Naive thymus-derived CD4-positive, alpha-beta T cell (primary cell): ENCODE measurements at regions of chr1 and their contacts with region 1.

Region 1: GRCh38 chr1:84690397-84691121 is at the start of gene SSX2IP:
- DNase-seq: peak; percentile 97 to 100 (median 99)
- ATAC-seq: peak; percentile 94
- H3K4me3 ChIP-seq: peak within 1 kb of the TSS; percentile 85
- H3K4me3 Mint-ChIP-seq: peak within 1 kb of the TSS; percentile 85 to 99 (median 92)
- H3K27ac ChIP-seq: peak within 1 kb of the TSS; percentile 82
- H3K27ac Mint-ChIP-seq: peak within 1 kb of the TSS; percentile 92 to 98 (median 96)
- H3K4me1 ChIP-seq: peaks cover 3 to 24% of the 10 kb centered on the region in 2 donors
- H3K4me1 Mint-ChIP-seq: peaks cover 29 to 76% (median 60%) of the 10 kb centered on the region in 7 donors
- H3K27me3 ChIP-seq: no peaks in the 10 kb centered on the region
- H3K27me3 Mint-ChIP-seq: no peaks in the 10 kb centered on the region
- total RNA-seq, gene SSX2IP: 7.5 to 13.4 (median 8.1) TPM

Region 2: GRCh38 chr1:84077476-84078107 is 613.0 kb before region 1 on chr1:
- CTCF ChIA-PET with region 1: no interaction called
- POLR2A ChIA-PET with region 1: no interaction called
- intact Hi-C with region 1: loop called (anchors 5 kb)
- DNase-seq: peak; percentile 64 to 79 (median 72)
- ATAC-seq: peak; percentile 97
- H3K4me3 ChIP-seq: peak overlapping the region; percentile 79
- H3K4me3 Mint-ChIP-seq: peak overlapping the region; percentile 84 to 93 (median 90)
- H3K27ac ChIP-seq: peak overlapping the region; percentile 66
- H3K27ac Mint-ChIP-seq: peak overlapping the region; percentile 23 to 87 (median 75)
- H3K4me1 ChIP-seq: peaks cover 9 to 10% of the 10 kb centered on the region in 2 donors
- H3K4me1 Mint-ChIP-seq: peaks cover 6 to 23% (median 14%) of the 10 kb centered on the region in 7 donors
- H3K27me3 ChIP-seq: no peaks in the 10 kb centered on the region
- H3K27me3 Mint-ChIP-seq: peaks cover 0 to 35% (median 0%) of the 10 kb centered on the region in 5 donors

Region 3: GRCh38 chr1:84433258-84434080 is 257.1 kb before region 1 on chr1:
- CTCF ChIA-PET with region 1: interaction called, 4 read pairs
- POLR2A ChIA-PET with region 1: interaction called, 4 read pairs
- intact Hi-C with region 1: loop called (anchors 1 to 2 kb)
- DNase-seq: peak in 7 of 9 donors; percentile 71 to 85 (median 79)
- ATAC-seq: peak; percentile 92
- H3K4me3 ChIP-seq: peak overlapping the region; percentile 34
- H3K4me3 Mint-ChIP-seq: peak overlapping the region in 9 of 10 donors; percentile 29 to 82 (median 77)
- H3K27ac ChIP-seq: peak overlapping the region; percentile 73
- H3K27ac Mint-ChIP-seq: peak overlapping the region in 2 of 9 donors; percentile 85 to 90
- H3K4me1 ChIP-seq: peaks cover 23 to 41% of the 10 kb centered on the region in 2 donors
- H3K4me1 Mint-ChIP-seq: peaks cover 0 to 12% (median 9%) of the 10 kb centered on the region in 7 donors
- H3K27me3 ChIP-seq: no peaks in the 10 kb centered on the region
- H3K27me3 Mint-ChIP-seq: no peaks in the 10 kb centered on the region

Region 4: GRCh38 chr1:84573967-84574842 is 116.4 kb before region 1 on chr1 and contains the start of gene CTBS:
- CTCF ChIA-PET with region 1: no interaction called
- POLR2A ChIA-PET with region 1: interaction called, 14 read pairs
- intact Hi-C with region 1: loop called (anchors 1 kb)
- DNase-seq: peak; percentile 69 to 84 (median 82)
- ATAC-seq: peak; percentile 96
- H3K4me3 ChIP-seq: peak within 1 kb of the TSS; percentile 77
- H3K4me3 Mint-ChIP-seq: peak within 1 kb of the TSS; percentile 97 to 99 (median 99)
- H3K27ac ChIP-seq: peak within 1 kb of the TSS; percentile 99
- H3K27ac Mint-ChIP-seq: peak within 1 kb of the TSS; percentile 98 to 100 (median 100)
- H3K4me1 ChIP-seq: peaks cover 9 to 13% of the 10 kb centered on the region in 2 donors
- H3K4me1 Mint-ChIP-seq: peaks cover 29 to 51% (median 40%) of the 10 kb centered on the region in 7 donors
- H3K27me3 ChIP-seq: no peaks in the 10 kb centered on the region
- H3K27me3 Mint-ChIP-seq: peaks cover 0 to 2% (median 0%) of the 10 kb centered on the region in 5 donors
- total RNA-seq, gene CTBS: 17.4 to 22.3 (median 19.0) TPM

Region 5: DNA sequence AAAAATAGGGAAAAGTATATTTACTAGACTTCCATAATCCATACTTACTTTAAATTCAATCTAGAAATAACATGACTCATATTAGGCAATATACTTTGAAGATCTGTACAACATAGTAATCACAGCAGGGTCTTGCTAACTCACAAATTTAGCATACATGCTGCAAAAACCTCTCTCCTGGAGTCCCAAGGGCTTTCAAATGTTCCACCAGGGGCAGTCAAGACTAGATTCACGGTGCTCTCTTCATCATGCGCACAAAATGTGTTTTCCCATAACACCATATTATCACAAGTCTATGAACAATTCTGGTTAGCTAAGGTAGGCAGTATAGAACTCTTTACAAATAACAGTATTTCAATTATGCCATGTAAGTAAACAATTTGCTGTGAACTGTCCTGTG is 46.1 kb before region 1 on chr1:
- CTCF ChIA-PET with region 1: no interaction called
- POLR2A ChIA-PET with region 1: no interaction called
- intact Hi-C with region 1: no loop called
- DNase-seq: no peak
- ATAC-seq: no peak
- H3K4me3 ChIP-seq: no peak overlapping the region
- H3K4me3 Mint-ChIP-seq: no peak overlapping the region
- H3K27ac ChIP-seq: no peak overlapping the region
- H3K27ac Mint-ChIP-seq: no peak overlapping the region
- H3K4me1 ChIP-seq: no peaks in the 10 kb centered on the region
- H3K4me1 Mint-ChIP-seq: no peaks in the 10 kb centered on the region
- H3K27me3 ChIP-seq: no peaks in the 10 kb centered on the region
- H3K27me3 Mint-ChIP-seq: no peaks in the 10 kb centered on the region

Region 6: GRCh38 chr1:84724128-84724860 is 33.7 kb after region 1 on chr1:
- CTCF ChIA-PET with region 1: interaction called, 11 read pairs
- POLR2A ChIA-PET with region 1: interaction called, 3 read pairs
- intact Hi-C with region 1: loop called (anchors 1 to 2 kb)
- DNase-seq: peak; percentile 11 to 43 (median 35)
- ATAC-seq: peak; percentile 74
- H3K4me3 ChIP-seq: no peak overlapping the region
- H3K4me3 Mint-ChIP-seq: no peak overlapping the region
- H3K27ac ChIP-seq: no peak overlapping the region
- H3K27ac Mint-ChIP-seq: no peak overlapping the region
- H3K4me1 ChIP-seq: no peaks in the 10 kb centered on the region
- H3K4me1 Mint-ChIP-seq: peaks cover 0 to 2% (median 0%) of the 10 kb centered on the region in 7 donors
- H3K27me3 ChIP-seq: no peaks in the 10 kb centered on the region
- H3K27me3 Mint-ChIP-seq: peaks cover 0 to 22% (median 0%) of the 10 kb centered on the region in 5 donors

Region 7: DNA sequence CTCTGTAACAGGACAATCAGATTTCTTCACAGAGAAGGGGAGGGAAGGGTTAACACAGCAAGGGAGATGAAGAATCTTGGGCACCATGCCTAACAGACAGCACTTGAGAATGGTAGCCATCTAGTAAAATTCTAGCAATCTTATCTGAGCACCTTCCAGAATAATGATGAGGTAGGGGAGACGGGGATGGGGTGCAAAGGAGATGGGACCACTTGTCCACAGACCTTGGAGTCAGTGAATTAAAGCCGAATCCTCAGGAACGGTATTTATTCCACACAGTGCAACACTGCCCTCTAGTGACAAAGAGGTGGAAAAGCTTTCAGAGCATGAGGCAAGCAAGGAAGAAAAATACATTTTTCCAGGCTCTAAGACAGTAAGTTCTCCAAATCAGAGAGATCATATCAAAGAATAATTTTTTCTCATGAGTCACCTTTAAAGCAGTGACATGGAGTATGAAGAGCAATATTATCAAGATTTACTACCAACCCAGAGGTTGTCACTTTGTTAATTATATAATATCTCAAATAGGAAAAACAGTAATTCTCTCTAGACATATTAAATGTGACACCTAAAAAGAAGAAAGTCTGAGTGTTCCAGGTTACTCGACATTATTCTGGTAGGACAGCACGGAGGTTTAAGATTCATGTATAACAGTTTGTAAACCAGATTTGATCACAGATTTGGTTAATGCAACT is 245.7 kb after region 1 on chr1:
- CTCF ChIA-PET with region 1: no interaction called
- POLR2A ChIA-PET with region 1: no interaction called
- intact Hi-C with region 1: loop called in 1 of 2 experiments (anchors 5 kb)
- DNase-seq: peak in 7 of 9 donors; percentile 38 to 66 (median 57)
- ATAC-seq: peak; percentile 91
- H3K4me3 ChIP-seq: no peak overlapping the region
- H3K4me3 Mint-ChIP-seq: peak overlapping the region in 2 of 10 donors; percentile 5 to 51
- H3K27ac ChIP-seq: no peak overlapping the region
- H3K27ac Mint-ChIP-seq: peak overlapping the region in 1 of 9 donors; percentile 27
- H3K4me1 ChIP-seq: no peaks in the 10 kb centered on the region
- H3K4me1 Mint-ChIP-seq: peaks cover 0 to 5% (median 0%) of the 10 kb centered on the region in 7 donors
- H3K27me3 ChIP-seq: no peaks in the 10 kb centered on the region
- H3K27me3 Mint-ChIP-seq: no peaks in the 10 kb centered on the region

Region 8: DNA sequence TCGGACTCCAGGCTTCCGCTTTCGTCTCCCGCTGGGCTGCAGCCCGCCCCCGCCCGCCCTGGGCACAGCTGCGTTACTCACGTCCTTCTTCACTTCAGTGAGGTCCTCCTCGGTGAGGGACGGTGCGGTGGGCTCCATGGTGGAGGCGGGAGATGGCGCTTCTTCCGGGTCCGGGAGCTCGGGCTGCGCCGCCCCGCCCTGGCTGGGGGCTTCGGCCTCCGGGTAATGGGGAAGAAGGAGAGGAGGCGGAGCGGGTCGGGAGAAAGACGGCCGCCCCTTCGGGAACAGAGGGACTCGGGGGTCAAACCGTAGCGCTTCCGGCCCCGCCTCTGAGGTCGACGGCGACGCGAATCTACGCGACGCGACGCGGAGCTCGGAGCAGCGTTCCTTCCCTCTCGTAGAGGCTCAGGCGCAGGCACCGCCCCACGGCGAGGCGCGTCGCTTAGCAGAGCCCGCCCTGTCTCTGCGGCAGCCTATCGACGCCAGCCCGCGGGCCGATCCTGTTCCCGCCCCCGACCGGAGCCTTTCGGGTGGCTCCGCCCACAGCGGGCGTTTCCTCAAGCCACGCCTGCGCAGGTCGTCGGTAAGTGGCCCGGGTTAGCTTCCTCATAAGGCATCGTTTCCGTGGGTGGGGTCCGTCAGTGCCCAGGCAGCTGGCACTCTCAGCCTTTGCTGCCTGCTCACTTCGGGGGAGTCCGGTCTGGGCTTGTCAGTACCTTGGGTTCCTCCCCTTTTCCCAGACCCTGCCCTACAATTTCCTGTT is 585.8 kb after region 1 on chr1 and contains the start of gene BCL10:
- CTCF ChIA-PET with region 1: no interaction called
- POLR2A ChIA-PET with region 1: no interaction called
- intact Hi-C with region 1: loop called (anchors 1 kb)
- DNase-seq: peak; percentile 95 to 98 (median 97)
- ATAC-seq: peak; percentile 97
- H3K4me3 ChIP-seq: peak within 1 kb of the TSS; percentile 89
- H3K4me3 Mint-ChIP-seq: peak within 1 kb of the TSS; percentile 82 to 95 (median 90)
- H3K27ac ChIP-seq: peak within 1 kb of the TSS; percentile 97
- H3K27ac Mint-ChIP-seq: peak within 1 kb of the TSS; percentile 84 to 97 (median 95)
- H3K4me1 ChIP-seq: peaks cover 17 to 28% of the 10 kb centered on the region in 2 donors
- H3K4me1 Mint-ChIP-seq: peaks cover 36 to 55% (median 47%) of the 10 kb centered on the region in 7 donors
- H3K27me3 ChIP-seq: no peaks in the 10 kb centered on the region
- H3K27me3 Mint-ChIP-seq: peaks cover 0 to 21% (median 0%) of the 10 kb centered on the region in 5 donors
- total RNA-seq, gene BCL10: 30.4 to 53.0 (median 35.4) TPM

Region 9: GRCh38 chr1:85450832-85451231 is 760.3 kb after region 1 on chr1:
- CTCF ChIA-PET with region 1: no interaction called
- POLR2A ChIA-PET with region 1: no interaction called
- intact Hi-C with region 1: no loop called
- DNase-seq: no peak
- ATAC-seq: no peak
- H3K4me3 ChIP-seq: no peak overlapping the region
- H3K4me3 Mint-ChIP-seq: no peak overlapping the region
- H3K27ac ChIP-seq: no peak overlapping the region
- H3K27ac Mint-ChIP-seq: no peak overlapping the region
- H3K4me1 ChIP-seq: no peaks in the 10 kb centered on the region
- H3K4me1 Mint-ChIP-seq: no peaks in the 10 kb centered on the region
- H3K27me3 ChIP-seq: no peaks in the 10 kb centered on the region
- H3K27me3 Mint-ChIP-seq: peaks cover 7 to 19% (median 12%) of the 10 kb centered on the region in 5 donors